Activated naive CD4-positive, alpha-beta T cell treated with anti-CD3 and anti-CD28 coated beads for 36 hours (primary cell): ENCODE measurements at regions of chrX and their contacts with region 1.

Region 1: GRCh38 chrX:71103110-71103983 is 3.2 kb downstream of the CXorf65 start:
- DNase-seq: peak; percentile 78
- H3K4me3 Mint-ChIP-seq: peak overlapping the region; percentile 53
- H3K27ac Mint-ChIP-seq: peak overlapping the region; percentile 95
- H3K4me1 Mint-ChIP-seq: peaks cover 80% of the 10 kb centered on the region
- H3K27me3 Mint-ChIP-seq: no peaks in the 10 kb centered on the region

Region 2: GRCh38 chrX:71118032-71118984 is 15.0 kb after region 1 on chrX and contains the start of gene MED12:
- CTCF ChIA-PET with region 1: interaction called, 20 read pairs
- intact Hi-C with region 1: loop called (anchors 1 kb)
- DNase-seq: peak; percentile 90
- H3K4me3 Mint-ChIP-seq: peak within 1 kb of the TSS; percentile 78
- H3K27ac Mint-ChIP-seq: peak within 1 kb of the TSS; percentile 90
- H3K4me1 Mint-ChIP-seq: peaks cover 21% of the 10 kb centered on the region
- H3K27me3 Mint-ChIP-seq: no peaks in the 10 kb centered on the region
- total RNA-seq, gene MED12: 43.5 to 43.6 TPM